Activated CD8-positive, alpha-beta T cell treated with anti-CD3 and anti-CD28 coated beads, Interleukin-2, amount 10 ng/mL, durations not matched to agents 7 days and 5 days (primary cell): ENCODE measurements at regions of chr1 and their contacts with region 1.

Region 1: GRCh38 chr1:24391882-24392603 is 21.5 kb downstream of the STPG1 start:
- DNase-seq: peak; percentile 65
- ATAC-seq: peak; percentile 71
- H3K4me3 Mint-ChIP-seq: peak overlapping the region; percentile 67
- H3K27ac Mint-ChIP-seq: peak overlapping the region; percentile 87
- H3K4me1 Mint-ChIP-seq: peaks cover 26% of the 10 kb centered on the region
- H3K27me3 Mint-ChIP-seq: no peaks in the 10 kb centered on the region

Region 2: GRCh38 chr1:23634842-23635651 is 757.0 kb before region 1 on chr1:
- CTCF ChIA-PET with region 1: no interaction called
- POLR2A ChIA-PET with region 1: no interaction called
- DNase-seq: peak; percentile 76
- ATAC-seq: peak; percentile 83
- H3K4me3 Mint-ChIP-seq: peak overlapping the region; percentile 63
- H3K27ac Mint-ChIP-seq: peak overlapping the region; percentile 81
- H3K4me1 Mint-ChIP-seq: peaks cover 29% of the 10 kb centered on the region
- H3K27me3 Mint-ChIP-seq: peaks cover 4% of the 10 kb centered on the region

Region 3: DNA sequence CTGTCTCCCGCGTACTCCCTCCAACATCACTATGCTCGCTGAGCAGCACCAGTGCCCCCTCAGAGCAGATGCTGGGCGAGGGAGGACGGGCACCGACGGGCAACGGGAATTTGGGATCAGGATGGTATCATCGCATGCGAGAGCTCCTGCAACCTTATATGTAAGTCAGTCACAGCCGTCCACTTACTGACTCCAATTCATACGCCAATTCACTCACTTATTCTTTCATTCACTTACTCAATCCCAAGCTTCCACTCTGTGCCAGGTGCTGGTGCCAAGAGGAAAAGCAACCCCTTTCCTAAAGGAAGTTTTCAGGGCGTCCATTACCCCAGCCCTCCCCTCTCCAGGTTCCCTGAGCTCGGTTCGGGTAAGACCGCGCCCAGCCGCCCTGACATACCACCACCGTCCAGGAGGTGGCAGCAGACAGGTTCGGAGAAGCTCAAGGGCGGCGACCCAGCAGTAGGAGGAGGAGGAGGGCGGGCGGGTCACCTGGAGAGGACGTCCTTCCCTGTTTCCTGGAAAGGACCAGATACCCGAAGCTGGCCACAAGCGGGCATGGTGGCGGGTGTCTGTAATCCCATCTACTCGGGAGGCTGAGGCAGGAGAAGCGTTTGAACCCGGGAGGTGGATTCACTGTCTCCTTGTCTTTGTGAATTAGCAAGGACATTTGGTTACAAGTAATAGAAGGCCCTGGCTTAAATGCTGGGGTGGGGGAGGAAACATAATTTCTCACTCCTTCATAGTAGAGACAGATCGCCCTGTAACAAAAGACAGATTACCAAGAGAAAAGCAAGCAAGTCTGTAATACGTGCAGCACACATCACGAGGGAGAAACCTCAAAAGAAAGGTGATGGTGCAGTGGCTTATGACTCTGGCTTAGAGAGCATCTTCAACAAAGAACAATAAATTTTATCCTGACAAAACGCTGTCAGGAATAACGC is 241.5 kb before region 1 on chr1:
- CTCF ChIA-PET with region 1: interaction called, 101 read pairs
- POLR2A ChIA-PET with region 1: no interaction called
- DNase-seq: peak; percentile 91
- ATAC-seq: peak; percentile 99
- H3K4me3 Mint-ChIP-seq: peak overlapping the region; percentile 44
- H3K27ac Mint-ChIP-seq: no peak overlapping the region
- H3K4me1 Mint-ChIP-seq: peaks cover 15% of the 10 kb centered on the region
- H3K27me3 Mint-ChIP-seq: peaks cover 35% of the 10 kb centered on the region

Region 4: GRCh38 chr1:24294757-24295371 is 97.2 kb before region 1 on chr1:
- CTCF ChIA-PET with region 1: interaction called, 12 read pairs
- POLR2A ChIA-PET with region 1: no interaction called
- DNase-seq: no peak
- ATAC-seq: no peak
- H3K4me3 Mint-ChIP-seq: no peak overlapping the region
- H3K27ac Mint-ChIP-seq: no peak overlapping the region
- H3K4me1 Mint-ChIP-seq: no peaks in the 10 kb centered on the region
- H3K27me3 Mint-ChIP-seq: peaks cover 31% of the 10 kb centered on the region

Region 5: GRCh38 chr1:24336075-24336474 is 56.0 kb before region 1 on chr1:
- CTCF ChIA-PET with region 1: no interaction called
- POLR2A ChIA-PET with region 1: no interaction called
- DNase-seq: no peak
- ATAC-seq: no peak
- H3K4me3 Mint-ChIP-seq: no peak overlapping the region
- H3K27ac Mint-ChIP-seq: no peak overlapping the region
- H3K4me1 Mint-ChIP-seq: peaks cover 4% of the 10 kb centered on the region
- H3K27me3 Mint-ChIP-seq: peaks cover 43% of the 10 kb centered on the region

Region 6: DNA sequence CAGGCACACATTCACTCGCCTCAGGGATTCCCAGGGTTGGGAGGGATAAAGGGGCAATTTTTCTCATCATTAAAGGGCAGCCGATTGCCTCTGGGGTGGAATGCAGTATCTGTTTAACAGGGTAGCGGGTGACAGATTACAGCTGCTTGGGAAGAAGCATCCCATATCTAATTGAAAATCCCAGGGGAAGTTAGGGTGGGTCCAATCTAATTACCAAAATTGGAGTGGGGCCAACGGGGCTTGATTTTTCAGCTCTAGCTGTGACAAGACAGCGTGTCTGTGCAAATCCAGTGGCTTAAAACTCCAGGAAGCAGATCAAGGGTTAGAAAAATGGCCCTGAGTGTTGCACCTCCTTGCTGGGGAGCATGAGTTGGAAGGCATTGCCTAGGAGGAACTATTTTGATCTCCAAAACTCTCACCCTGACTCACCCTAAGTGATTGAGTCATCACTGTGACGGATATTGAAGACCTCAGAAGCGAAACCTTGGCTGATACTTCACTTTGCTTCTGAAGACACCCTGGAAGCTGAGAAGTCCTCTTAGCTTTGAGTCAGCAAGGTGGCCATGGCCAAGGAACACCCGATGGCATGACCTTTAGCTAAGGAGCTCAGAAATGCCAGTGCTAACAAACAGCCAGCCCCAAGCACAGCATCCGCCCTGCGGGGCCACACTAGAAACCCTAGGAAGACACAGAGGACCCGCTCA is 26.9 kb before region 1 on chr1:
- CTCF ChIA-PET with region 1: interaction called, 33 read pairs
- POLR2A ChIA-PET with region 1: no interaction called
- DNase-seq: peak; percentile 26
- ATAC-seq: peak; percentile 70
- H3K4me3 Mint-ChIP-seq: no peak overlapping the region
- H3K27ac Mint-ChIP-seq: no peak overlapping the region
- H3K4me1 Mint-ChIP-seq: peaks cover 9% of the 10 kb centered on the region
- H3K27me3 Mint-ChIP-seq: no peaks in the 10 kb centered on the region

Region 7: GRCh38 chr1:24526940-24527542 is 135.0 kb after region 1 on chr1:
- CTCF ChIA-PET with region 1: interaction called, 13 read pairs
- POLR2A ChIA-PET with region 1: no interaction called
- DNase-seq: peak; percentile 63
- ATAC-seq: peak; percentile 47
- H3K4me3 Mint-ChIP-seq: no peak overlapping the region
- H3K27ac Mint-ChIP-seq: no peak overlapping the region
- H3K4me1 Mint-ChIP-seq: peaks cover 21% of the 10 kb centered on the region
- H3K27me3 Mint-ChIP-seq: no peaks in the 10 kb centered on the region

Region 8: DNA sequence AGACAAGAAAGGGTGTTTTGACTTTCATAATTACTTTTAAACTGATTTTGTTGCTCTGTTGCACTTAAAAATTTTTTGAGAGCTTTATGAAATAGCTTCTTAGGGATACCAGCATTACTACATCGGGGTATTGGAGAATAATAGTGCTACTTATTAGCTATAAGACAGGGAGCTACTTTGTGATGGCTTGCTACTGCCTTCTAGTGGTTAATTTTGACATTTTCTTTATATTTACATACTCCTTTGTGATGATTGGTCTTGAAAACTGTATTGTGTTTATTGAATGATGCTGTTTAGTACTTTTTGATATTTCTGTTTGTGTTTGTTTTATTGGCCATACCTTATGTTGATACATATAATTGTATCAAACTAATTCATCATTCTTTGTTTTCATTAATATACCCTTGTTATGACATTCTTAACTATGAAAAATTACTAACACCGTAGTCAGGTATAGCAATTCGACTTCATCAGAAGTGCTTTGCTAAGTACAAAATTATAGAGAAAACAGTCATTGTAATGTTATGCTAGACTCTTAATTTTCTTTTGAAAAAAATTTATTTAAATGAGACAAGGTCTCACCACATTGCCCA is 438.7 kb after region 1 on chr1:
- CTCF ChIA-PET with region 1: interaction called, 11 read pairs
- POLR2A ChIA-PET with region 1: no interaction called
- DNase-seq: no peak
- ATAC-seq: peak; percentile 51
- H3K4me3 Mint-ChIP-seq: no peak overlapping the region
- H3K27ac Mint-ChIP-seq: no peak overlapping the region
- H3K4me1 Mint-ChIP-seq: no peaks in the 10 kb centered on the region
- H3K27me3 Mint-ChIP-seq: peaks cover 7% of the 10 kb centered on the region